ENCODE measurements at regions of chr3 and their contacts with region 1.

Region 1: GRCh38 chr3:168040607-168041208 is 55.0 kb downstream of the GOLIM4 start:
- DNase-seq: peak; percentile 63
- ATAC-seq: peak; percentile 85
- H3K4me3 ChIP-seq: no peak overlapping the region
- H3K27ac ChIP-seq: no peak overlapping the region
- H3K4me1 ChIP-seq: no peaks in the 10 kb centered on the region
- H3K27me3 ChIP-seq: no peaks in the 10 kb centered on the region
- CTCF ChIP-seq: peak; percentile 88

Region 2: DNA sequence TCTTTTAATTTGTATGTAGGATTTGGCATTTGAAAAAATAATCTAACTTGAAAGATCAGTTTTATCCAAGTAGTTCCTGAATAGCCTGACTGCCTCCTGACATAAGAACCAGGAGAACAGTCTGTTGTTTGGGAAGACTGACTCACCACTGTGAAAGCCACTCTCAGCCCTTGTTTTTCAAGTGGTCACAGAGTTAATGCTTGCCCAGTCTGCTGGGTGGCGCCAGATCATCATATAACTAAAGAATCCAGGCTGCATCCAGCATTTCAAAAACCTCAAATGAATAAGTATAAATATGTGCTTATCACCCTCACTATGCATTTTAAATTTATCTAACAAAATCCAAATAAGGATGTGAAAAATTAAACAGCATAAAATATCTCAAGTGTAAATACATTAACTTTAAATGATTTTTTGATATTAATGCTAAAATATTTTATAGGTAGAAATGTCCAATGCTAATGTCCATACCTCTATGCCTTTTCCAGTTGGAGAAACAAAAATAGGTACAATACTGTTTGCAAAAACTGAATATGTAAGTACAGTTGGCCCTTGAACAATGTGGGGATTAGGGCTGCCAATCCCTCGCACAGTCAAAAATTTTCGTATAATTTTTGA is 633.7 kb before region 1 on chr3:
- CTCF ChIA-PET with region 1: no interaction called
- POLR2A ChIA-PET with region 1: no interaction called
- intact Hi-C with region 1: loop called (anchors 5 kb)
- DNase-seq: peak; percentile 75
- ATAC-seq: peak; percentile 100
- H3K4me3 ChIP-seq: no peak overlapping the region
- H3K27ac ChIP-seq: no peak overlapping the region
- H3K4me1 ChIP-seq: no peaks in the 10 kb centered on the region
- H3K27me3 ChIP-seq: peaks cover 20% of the 10 kb centered on the region
- CTCF ChIP-seq: peak; percentile 89

Region 3: GRCh38 chr3:167837466-167837865 is 203.2 kb before region 1 on chr3:
- CTCF ChIA-PET with region 1: interaction called, 3 read pairs
- POLR2A ChIA-PET with region 1: no interaction called
- intact Hi-C with region 1: loop called (anchors 1 kb)
- DNase-seq: peak; percentile 52
- ATAC-seq: peak; percentile 18
- H3K4me3 ChIP-seq: no peak overlapping the region
- H3K27ac ChIP-seq: no peak overlapping the region
- H3K4me1 ChIP-seq: no peaks in the 10 kb centered on the region
- H3K27me3 ChIP-seq: no peaks in the 10 kb centered on the region
- CTCF ChIP-seq: peak; percentile 67

Region 4: GRCh38 chr3:167882067-167882667 is 158.5 kb before region 1 on chr3:
- CTCF ChIA-PET with region 1: interaction called, 3 read pairs
- POLR2A ChIA-PET with region 1: no interaction called
- intact Hi-C with region 1: loop called (anchors 1 kb)
- DNase-seq: peak; percentile 73
- ATAC-seq: peak; percentile 45
- H3K4me3 ChIP-seq: no peak overlapping the region
- H3K27ac ChIP-seq: no peak overlapping the region
- H3K4me1 ChIP-seq: peaks cover 17% of the 10 kb centered on the region
- H3K27me3 ChIP-seq: peaks cover 8% of the 10 kb centered on the region; the same call in 1 of the 2 replicates
- CTCF ChIP-seq: peak; percentile 77

Region 5: DNA sequence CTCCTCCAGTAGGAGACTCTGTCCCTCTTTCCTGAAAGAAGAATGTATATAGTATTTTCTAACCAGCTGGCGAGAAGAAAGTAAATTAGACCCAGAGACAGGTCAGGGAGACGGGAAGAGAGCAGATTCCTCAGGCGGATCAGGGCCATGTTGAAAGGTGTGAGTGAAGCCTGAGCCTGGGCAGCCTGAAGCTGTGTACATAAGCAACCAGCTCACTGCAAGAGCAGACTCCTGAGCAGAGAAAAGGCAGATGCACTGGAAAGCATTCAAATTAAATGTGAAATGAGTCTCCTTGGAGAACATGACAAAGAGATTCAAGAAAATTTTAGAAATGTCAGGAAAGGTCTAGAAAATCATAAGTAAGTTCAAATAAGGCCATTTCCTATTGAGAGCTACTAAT is 110.7 kb before region 1 on chr3:
- CTCF ChIA-PET with region 1: no interaction called
- POLR2A ChIA-PET with region 1: no interaction called
- intact Hi-C with region 1: loop called (anchors 1 kb)
- DNase-seq: no peak
- ATAC-seq: peak; percentile 44; the same call in 1 of the 2 replicates
- H3K4me3 ChIP-seq: no peak overlapping the region
- H3K27ac ChIP-seq: no peak overlapping the region
- H3K4me1 ChIP-seq: no peaks in the 10 kb centered on the region
- H3K27me3 ChIP-seq: peaks cover 16% of the 10 kb centered on the region
- CTCF ChIP-seq: no peak

Region 6: GRCh38 chr3:168081171-168081771 is 40.6 kb after region 1 on chr3:
- CTCF ChIA-PET with region 1: no interaction called
- POLR2A ChIA-PET with region 1: no interaction called
- intact Hi-C with region 1: no loop called
- DNase-seq: no peak
- ATAC-seq: no peak
- H3K4me3 ChIP-seq: no peak overlapping the region
- H3K27ac ChIP-seq: no peak overlapping the region
- H3K4me1 ChIP-seq: peaks cover 22% of the 10 kb centered on the region
- H3K27me3 ChIP-seq: no peaks in the 10 kb centered on the region
- CTCF ChIP-seq: no peak